Cardiac septum (tissue), 1 donor: ENCODE measurements at regions of chr2 and their contacts with region 1.

Region 1: DNA sequence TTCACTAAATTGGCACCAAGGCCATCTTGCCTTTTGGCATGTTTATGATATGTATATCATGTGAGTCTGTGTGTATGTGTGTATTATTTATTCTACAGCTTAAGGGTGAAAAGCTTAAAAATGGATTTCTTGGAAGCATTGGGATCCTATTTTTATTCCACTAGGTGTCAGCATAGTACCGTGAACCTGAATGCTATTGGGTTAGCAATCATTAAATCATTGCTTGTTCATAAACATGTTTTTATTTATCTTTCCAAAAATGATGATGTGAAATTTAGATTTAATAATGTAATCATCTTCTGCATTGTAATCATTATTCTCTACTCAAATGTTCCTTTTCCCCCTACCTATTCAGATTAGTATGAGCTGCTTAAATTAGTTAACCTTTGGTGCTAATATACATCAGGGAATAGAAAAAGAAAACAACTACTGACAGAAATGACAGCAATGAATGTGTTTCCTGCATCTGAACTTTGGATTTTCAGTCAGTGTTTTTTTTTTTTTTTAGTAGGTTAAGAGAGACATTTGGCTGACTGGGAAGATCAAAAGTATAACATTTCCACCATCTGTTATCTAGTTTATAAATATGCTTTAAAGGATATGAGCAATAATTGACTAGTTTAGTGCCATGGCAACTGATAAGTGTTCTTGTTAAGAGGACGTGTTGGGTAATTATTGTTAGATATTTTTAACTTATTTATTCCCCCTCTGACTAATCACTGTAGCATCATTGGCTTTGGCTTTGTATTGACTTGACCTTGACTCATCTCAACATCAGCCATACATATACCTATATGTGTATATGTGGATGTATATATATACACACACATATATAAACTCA is 14.1 kb upstream of the ZSWIM2 start:
- DNase-seq: no peak

Region 2: GRCh38 chr2:186991766-186992417 is 128.8 kb after region 1 on chr2:
- intact Hi-C with region 1: loop called (anchors 10 kb)
- DNase-seq: no peak